ENCODE measurements at regions of chr5 and their contacts with region 1.

Region 1: DNA sequence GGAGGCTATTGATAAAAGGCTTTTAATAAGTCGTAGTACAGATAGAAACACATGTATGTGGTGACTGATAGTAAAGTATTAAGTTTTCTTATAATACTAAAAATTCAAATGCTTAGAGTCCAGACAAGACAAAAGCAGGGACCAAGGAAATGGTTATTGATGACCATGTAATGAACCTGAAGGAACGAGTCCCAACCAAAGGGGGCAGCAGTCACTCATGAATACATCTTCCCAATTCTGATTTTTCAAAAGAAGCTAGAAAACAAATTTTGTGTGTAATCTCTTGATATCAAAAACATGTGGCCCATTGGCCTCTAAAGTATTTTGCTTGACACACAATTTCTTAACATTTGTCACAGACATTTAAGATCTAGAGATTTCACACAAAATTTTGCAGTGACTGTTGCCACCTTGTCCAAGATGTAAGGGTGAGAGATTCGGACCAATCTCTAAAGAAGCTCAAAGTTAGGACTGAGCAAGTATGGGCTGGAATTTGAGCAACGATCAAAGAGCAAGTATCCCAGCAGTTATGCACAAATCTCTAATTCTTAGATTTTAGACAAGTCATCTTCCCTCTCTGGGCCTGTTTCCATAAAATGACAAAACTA is 66.8 kb downstream of the ARL15 start:
- DNase-seq: no peak
- H3K4me3 ChIP-seq: no peak overlapping the region
- CTCF ChIP-seq: peak; percentile 53

Region 2: GRCh38 chr5:53834500-53834899 is 409.1 kb before region 1 on chr5:
- CTCF ChIA-PET with region 1: no interaction called
- POLR2A ChIA-PET with region 1: no interaction called
- DNase-seq: no peak
- H3K4me3 ChIP-seq: no peak overlapping the region
- CTCF ChIP-seq: no peak

Region 3: GRCh38 chr5:54171645-54172384 is 71.8 kb before region 1 on chr5:
- CTCF ChIA-PET with region 1: no interaction called
- POLR2A ChIA-PET with region 1: no interaction called
- DNase-seq: no peak
- H3K4me3 ChIP-seq: no peak overlapping the region
- CTCF ChIP-seq: no peak

Region 4: GRCh38 chr5:54254482-54255198 is 11.1 kb after region 1 on chr5:
- CTCF ChIA-PET with region 1: interaction called, 41 read pairs
- POLR2A ChIA-PET with region 1: no interaction called
- DNase-seq: no peak
- H3K4me3 ChIP-seq: no peak overlapping the region
- CTCF ChIP-seq: no peak

Region 5: DNA sequence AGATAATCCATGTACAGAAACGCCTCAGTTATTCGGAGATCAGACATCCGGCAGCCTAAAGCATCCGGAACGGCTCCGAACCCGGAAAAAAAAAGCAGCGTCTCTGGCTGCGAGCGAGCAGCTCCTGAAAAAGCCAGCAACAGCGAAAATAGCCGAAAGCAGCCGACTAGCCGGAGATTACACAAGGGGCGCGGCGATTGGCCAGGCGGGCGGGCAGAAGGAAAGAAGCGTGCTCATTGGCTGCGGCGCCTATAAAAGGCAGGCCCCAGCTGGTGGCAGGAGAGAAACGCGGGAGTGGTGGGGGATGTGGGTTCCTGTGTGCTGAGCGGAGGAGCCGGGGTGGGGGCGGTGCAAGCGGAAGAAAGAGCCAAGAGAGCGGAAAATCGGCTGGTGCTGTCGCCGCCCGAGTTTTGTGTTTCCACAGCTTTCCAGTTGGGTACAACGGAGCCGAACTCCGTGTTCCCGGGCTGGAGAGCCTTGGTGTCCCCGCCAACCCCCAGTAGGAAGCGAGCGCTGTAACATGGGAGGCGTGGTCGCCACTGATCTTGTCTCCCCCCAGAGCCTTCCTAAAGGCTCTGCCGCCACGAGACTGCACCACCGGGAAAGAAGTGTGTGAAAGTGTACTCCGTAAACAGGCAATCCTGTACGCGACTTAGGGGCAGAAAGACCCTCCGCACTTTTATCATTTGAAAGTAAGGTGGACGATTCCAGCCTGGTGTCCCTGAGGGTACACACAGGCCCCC is 67.0 kb after region 1 on chr5 and contains the start of gene ARL15:
- CTCF ChIA-PET with region 1: interaction called, 12 read pairs
- POLR2A ChIA-PET with region 1: interaction called, 6 read pairs
- DNase-seq: peak; percentile 73
- H3K4me3 ChIP-seq: peak within 1 kb of the TSS; percentile 83
- CTCF ChIP-seq: no peak

Region 6: GRCh38 chr5:54360089-54360488 is 116.5 kb after region 1 on chr5:
- CTCF ChIA-PET with region 1: no interaction called
- POLR2A ChIA-PET with region 1: no interaction called
- DNase-seq: no peak
- H3K4me3 ChIP-seq: no peak overlapping the region
- CTCF ChIP-seq: no peak

Region 7: DNA sequence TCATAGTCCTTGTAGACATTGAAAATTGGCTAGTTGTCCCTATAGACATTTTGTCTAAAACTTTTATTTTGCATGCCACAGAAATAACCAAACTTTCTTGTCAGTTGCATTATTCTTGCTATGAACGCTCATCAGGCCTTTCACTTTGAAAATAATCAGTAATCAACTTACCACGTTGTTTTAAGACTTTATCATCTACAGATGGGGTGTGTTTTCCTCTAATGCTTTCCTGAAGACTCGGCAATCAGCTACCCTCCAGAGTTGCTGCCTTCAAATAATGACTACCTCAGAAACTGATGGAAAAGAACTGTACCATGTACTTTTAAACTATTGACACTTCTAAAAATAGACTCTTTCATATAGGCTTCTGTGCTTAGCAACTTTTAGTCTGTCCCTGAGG is 178.4 kb after region 1 on chr5:
- CTCF ChIA-PET with region 1: interaction called, 62 read pairs
- POLR2A ChIA-PET with region 1: no interaction called
- DNase-seq: no peak
- H3K4me3 ChIP-seq: no peak overlapping the region
- CTCF ChIP-seq: no peak

Region 8: DNA sequence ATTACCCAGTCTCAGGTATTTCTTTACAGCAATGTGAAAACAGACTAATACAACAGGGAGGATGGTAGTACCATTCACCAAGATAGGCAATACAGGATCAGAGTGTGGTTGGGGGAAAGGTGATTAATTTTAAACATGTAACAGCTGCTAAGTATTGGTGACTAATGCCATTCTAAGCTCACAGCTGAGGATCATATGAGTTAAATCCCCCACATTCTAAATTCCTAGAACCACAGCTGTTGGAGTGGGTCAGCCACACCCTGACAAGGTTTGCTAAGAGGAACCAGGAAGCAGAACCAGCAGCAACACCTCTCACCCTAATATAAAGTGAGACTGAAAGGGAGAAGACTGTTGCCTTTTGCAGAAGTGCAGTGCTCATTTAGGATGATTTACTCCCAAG is 236.7 kb after region 1 on chr5:
- CTCF ChIA-PET with region 1: interaction called, 20 read pairs
- POLR2A ChIA-PET with region 1: no interaction called
- DNase-seq: no peak
- H3K4me3 ChIP-seq: no peak overlapping the region
- CTCF ChIP-seq: no peak